ENCODE measurements at regions of chr7 and their contacts with region 1.

Region 1: GRCh38 chr7:6589829-6590644 is at the start of gene INTS15:
- DNase-seq: peak; percentile 89
- ATAC-seq: peak; percentile 90
- H3K4me3 Mint-ChIP-seq: peak within 1 kb of the TSS; percentile 84
- H3K27ac Mint-ChIP-seq: peak within 1 kb of the TSS; percentile 80
- H3K4me1 Mint-ChIP-seq: peaks cover 24% of the 10 kb centered on the region
- H3K27me3 Mint-ChIP-seq: no peaks in the 10 kb centered on the region
- total RNA-seq, gene INTS15: 27.8 to 31.8 TPM

Region 2: GRCh38 chr7:6577365-6578113 is 12.5 kb before region 1 on chr7 and contains the start of gene ZDHHC4:
- CTCF ChIA-PET with region 1: interaction called, 6 read pairs
- POLR2A ChIA-PET with region 1: interaction called, 8 read pairs
- intact Hi-C with region 1: loop called (anchors 1 kb)
- DNase-seq: peak; percentile 94
- ATAC-seq: peak; percentile 97
- H3K4me3 Mint-ChIP-seq: peak within 1 kb of the TSS; percentile 83
- H3K27ac Mint-ChIP-seq: peak within 1 kb of the TSS; percentile 88
- H3K4me1 Mint-ChIP-seq: peaks cover 25% of the 10 kb centered on the region
- H3K27me3 Mint-ChIP-seq: no peaks in the 10 kb centered on the region
- total RNA-seq, gene ZDHHC4: 30.1 to 34.1 TPM

Region 3: GRCh38 chr7:6637544-6638229 is 47.6 kb after region 1 on chr7:
- CTCF ChIA-PET with region 1: interaction called, 3 read pairs
- POLR2A ChIA-PET with region 1: no interaction called
- intact Hi-C with region 1: loop called in 1 of 2 experiments (anchors 1 kb)
- DNase-seq: peak; percentile 67
- ATAC-seq: peak; percentile 62
- H3K4me3 Mint-ChIP-seq: peak overlapping the region; percentile 81
- H3K27ac Mint-ChIP-seq: peak overlapping the region; percentile 84
- H3K4me1 Mint-ChIP-seq: peaks cover 26% of the 10 kb centered on the region
- H3K27me3 Mint-ChIP-seq: no peaks in the 10 kb centered on the region

Region 4: GRCh38 chr7:6706677-6707544 is 116.9 kb after region 1 on chr7 and contains the start of gene ZNF12:
- CTCF ChIA-PET with region 1: interaction called, 3 read pairs
- POLR2A ChIA-PET with region 1: no interaction called
- intact Hi-C with region 1: loop called in 1 of 2 experiments (anchors 1 kb)
- DNase-seq: peak; percentile 98
- ATAC-seq: peak; percentile 95
- H3K4me3 Mint-ChIP-seq: peak within 1 kb of the TSS; percentile 86
- H3K27ac Mint-ChIP-seq: peak within 1 kb of the TSS; percentile 86
- H3K4me1 Mint-ChIP-seq: peaks cover 36% of the 10 kb centered on the region
- H3K27me3 Mint-ChIP-seq: no peaks in the 10 kb centered on the region
- total RNA-seq, gene ZNF12: 22.4 to 23.2 TPM

Region 5: DNA sequence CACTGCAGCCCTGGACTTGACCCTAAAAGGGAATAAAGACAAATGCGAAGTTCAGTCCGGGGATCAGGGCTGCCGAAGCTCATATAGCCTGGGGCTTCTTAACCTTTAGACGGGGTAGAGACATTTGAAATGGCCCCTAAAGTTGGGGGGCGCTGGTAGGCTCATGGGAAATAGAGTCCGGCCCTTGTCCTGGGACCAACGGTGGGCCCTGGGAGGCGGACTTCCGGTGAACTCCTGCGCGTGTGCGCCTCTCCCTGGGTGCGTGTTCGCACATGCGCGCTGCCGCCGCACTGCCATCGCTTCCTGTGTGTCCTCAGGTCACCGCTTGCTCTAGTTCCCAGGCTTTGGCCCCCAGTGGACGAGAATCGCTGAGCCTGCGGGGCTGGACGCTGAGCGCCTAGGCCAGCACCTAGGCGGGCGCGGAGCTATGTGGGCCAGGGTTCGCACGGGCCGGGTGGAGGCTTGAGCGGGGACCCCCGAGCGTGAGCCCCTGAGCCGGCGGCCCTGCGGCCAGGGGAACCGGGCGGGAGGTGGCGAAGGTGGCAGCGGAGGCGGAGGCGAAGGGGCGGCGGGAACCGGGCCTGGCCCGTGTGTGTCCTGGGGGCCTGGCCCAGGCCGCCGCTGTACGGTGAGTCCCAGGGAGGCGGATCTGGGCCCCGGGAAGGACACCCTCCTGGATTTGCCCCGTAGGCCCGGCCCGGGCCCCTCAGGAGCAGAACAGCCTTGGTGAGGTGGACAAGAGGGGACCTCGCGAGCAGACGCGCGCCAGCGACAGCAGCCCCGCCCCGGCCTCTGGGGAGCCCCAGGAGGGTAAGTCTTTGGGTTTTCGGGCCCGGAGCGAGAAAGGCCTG is 139.7 kb after region 1 on chr7:
- CTCF ChIA-PET with region 1: no interaction called
- POLR2A ChIA-PET with region 1: no interaction called
- intact Hi-C with region 1: loop called in 1 of 2 experiments (anchors 1 kb)
- DNase-seq: peak; percentile 92
- ATAC-seq: peak; percentile 99
- H3K4me3 Mint-ChIP-seq: peak overlapping the region; percentile 87
- H3K27ac Mint-ChIP-seq: peak overlapping the region; percentile 93
- H3K4me1 Mint-ChIP-seq: peaks cover 23% of the 10 kb centered on the region
- H3K27me3 Mint-ChIP-seq: no peaks in the 10 kb centered on the region

Region 6: GRCh38 chr7:6831018-6831725 is 241.1 kb after region 1 on chr7:
- CTCF ChIA-PET with region 1: no interaction called
- POLR2A ChIA-PET with region 1: no interaction called
- intact Hi-C with region 1: loop called in 1 of 2 experiments (anchors 10 kb)
- DNase-seq: no peak
- ATAC-seq: no peak
- H3K4me3 Mint-ChIP-seq: no peak overlapping the region
- H3K27ac Mint-ChIP-seq: no peak overlapping the region
- H3K4me1 Mint-ChIP-seq: no peaks in the 10 kb centered on the region
- H3K27me3 Mint-ChIP-seq: peaks cover 2% of the 10 kb centered on the region

Region 7: GRCh38 chr7:6934986-6935385 is 344.9 kb after region 1 on chr7:
- CTCF ChIA-PET with region 1: no interaction called
- POLR2A ChIA-PET with region 1: no interaction called
- intact Hi-C with region 1: loop called in 1 of 2 experiments (anchors 10 kb)
- DNase-seq: no peak
- ATAC-seq: no peak
- H3K4me3 Mint-ChIP-seq: no peak overlapping the region
- H3K27ac Mint-ChIP-seq: no peak overlapping the region
- H3K4me1 Mint-ChIP-seq: peaks cover 2% of the 10 kb centered on the region
- H3K27me3 Mint-ChIP-seq: no peaks in the 10 kb centered on the region